ENCODE measurements at regions of chr20 and their contacts with region 1.

Region 1: DNA sequence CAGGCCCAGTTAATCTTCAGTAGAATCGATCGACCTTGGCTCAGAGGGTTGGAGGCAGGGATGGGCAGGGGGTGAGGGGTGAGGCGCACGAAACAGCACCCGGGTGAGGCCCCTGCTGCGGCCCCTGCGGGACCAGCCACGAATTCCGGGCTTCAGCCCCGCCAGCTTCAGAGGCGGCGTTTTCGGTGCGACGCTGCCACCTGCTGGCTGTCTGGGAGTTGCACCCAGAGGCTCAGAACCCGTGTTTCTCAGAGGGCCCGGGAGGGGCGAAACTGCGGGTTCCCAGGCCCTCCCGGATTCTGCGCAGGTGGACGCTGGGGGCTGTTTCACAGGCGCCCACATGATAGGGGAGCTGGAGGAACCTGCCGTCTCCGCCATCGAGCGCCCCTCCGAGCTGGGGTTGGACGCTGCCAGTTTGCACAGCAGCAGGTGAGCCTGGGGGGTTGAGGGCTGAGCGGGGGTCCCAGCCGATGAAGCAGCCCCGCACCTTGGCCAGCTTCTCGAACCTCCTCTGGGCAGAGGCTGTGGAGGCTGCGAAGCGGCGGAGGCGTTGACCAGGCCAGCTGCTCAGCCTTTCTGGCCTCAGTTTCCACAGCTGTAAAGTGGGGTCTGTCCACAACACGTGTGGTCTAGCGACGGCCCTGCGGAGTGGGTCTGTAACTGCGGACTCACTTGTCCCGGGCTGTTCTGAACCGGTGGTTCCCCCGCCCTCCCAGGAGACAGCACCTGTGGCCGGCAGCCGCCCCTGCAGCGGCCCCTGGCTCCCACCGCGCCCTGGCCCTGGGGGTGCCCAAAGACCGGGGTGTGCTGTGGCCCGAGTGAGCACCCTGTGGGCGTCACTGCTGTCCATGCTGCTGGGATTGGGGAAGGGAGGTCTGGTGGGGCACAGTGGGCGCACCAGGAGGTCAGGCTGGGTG is 2.5 kb upstream of the BHLHE23 start:
- DNase-seq: peak; percentile 57 to 96 (median 80)

Region 2: DNA sequence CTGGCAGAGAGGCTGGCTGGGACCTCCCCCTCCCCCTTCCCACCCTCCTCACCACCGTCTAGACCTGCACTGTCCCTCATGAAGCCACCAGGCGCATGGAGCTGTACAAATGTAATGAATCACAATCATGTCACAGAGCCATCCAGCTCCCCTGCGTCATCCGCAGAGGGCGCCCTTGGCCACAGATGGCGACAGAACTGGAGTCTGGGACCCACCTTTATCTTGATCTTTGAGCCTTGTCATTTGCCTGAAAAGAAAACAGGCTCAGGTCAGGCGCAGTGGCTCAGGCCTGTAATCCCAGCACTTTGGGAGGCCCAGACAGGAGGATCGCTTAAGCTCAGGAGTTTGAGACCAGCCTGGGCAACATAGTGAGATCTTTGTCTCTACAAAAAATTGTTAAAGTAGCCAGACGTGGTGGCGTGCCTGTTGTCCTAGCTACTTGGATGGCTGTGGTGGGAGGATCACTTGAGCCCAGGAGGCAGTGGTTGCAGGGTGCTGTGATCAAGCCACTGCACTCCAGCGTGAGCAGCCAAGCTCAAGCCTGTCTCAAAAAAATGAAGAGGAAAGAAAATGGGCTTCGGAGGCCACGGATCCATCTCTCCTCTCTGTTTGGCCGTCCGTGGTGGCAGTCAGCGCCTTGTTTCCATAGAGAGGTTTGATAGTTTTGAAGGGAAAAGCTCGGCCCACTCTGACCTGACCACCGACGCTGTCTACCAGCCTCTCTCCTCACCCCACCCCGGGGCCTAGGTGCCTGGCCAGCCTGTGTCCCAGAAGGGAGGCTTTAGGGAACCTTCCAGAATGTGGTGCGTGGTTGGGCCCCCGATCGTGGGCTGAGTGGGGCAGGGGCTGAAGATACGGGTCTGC is 186.3 kb before region 1 on chr20:
- intact Hi-C with region 1: no loop called
- DNase-seq: peak in 2 of 10 donors; percentile 56 to 93

Region 3: DNA sequence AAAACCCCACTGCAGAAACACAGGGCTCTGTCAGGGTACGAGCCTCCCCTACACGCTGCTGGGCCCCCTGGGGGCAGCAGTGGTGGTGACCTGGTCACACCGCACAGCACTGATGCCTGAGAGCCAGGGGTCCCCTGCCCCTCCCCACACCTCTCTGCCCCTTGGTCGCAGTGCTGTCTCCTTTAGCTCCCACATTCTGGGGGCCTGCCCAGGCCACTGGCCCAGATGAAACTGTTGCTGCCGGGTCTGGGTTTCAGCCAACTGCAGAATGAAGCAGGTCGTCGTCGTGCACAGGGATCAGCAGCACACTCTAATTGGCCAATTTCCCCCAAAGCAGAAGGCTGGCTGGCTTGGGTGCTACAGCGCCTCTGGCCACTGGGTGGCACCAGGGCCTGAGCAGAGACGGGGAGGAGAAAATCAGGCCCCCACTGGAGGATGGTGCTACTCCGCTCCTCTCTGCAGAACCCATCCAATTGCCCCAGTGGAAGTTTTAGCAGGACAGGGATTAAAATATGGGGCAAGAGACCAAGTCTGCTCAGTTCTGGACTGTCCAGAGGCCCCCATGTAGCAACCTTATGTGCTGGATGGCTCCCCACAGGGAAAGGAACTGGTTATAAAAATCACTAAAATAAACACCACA is 109.1 kb before region 1 on chr20:
- intact Hi-C with region 1: loop called (anchors 2 kb)
- DNase-seq: peak; percentile 70 to 96 (median 82)

Region 4: GRCh38 chr20:62926239-62927104 is 82.8 kb before region 1 on chr20 and contains the start of gene DIDO1:
- intact Hi-C with region 1: no loop called
- DNase-seq: peak; percentile 78 to 99 (median 88)

Region 5: DNA sequence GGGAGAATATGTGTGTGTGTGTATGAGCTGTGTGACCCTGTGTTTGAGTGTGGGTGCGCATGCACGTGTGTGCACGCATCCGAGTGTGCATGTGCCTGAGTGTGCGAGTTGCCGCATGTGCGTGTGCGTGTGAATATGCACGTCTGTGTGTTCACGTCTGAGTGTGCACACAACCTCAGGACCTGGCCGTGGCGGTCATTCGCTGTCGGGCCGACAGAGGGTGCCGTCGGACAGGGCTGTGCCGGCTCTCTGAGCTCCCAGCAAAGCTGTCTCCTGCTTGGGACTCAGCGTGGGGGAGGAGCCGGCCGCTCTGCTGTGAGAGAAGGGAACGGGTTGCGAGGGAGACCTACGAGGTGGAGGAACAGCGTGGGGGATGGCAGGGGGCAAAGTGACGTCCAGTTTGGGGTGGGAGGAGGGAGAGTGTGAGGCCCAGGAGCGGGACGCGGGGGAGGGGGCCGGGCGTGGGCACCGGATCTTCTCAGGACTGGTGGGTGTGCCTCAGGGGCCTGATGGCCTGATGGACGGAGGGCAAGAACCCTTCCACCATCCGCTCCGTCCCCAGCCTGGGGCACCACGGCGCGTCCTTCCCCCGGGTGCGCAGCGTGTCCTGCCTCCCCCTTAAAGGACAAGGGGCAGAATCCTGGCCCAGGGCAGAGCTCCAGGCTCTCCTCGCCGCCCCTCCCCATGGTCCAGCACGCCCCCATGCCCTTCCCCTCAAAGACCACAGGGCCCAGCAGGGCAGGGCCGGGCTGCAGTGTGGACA is 36.9 kb before region 1 on chr20:
- intact Hi-C with region 1: loop called (anchors 1 kb)
- DNase-seq: peak; percentile 78 to 98 (median 87)

Region 6: GRCh38 chr20:63025534-63026331 is 16.4 kb after region 1 on chr20:
- intact Hi-C with region 1: no loop called
- DNase-seq: peak in 7 of 10 donors; percentile 24 to 91 (median 46)